ENCODE measurements at regions of chr7 and their contacts with region 1.

Region 1: DNA sequence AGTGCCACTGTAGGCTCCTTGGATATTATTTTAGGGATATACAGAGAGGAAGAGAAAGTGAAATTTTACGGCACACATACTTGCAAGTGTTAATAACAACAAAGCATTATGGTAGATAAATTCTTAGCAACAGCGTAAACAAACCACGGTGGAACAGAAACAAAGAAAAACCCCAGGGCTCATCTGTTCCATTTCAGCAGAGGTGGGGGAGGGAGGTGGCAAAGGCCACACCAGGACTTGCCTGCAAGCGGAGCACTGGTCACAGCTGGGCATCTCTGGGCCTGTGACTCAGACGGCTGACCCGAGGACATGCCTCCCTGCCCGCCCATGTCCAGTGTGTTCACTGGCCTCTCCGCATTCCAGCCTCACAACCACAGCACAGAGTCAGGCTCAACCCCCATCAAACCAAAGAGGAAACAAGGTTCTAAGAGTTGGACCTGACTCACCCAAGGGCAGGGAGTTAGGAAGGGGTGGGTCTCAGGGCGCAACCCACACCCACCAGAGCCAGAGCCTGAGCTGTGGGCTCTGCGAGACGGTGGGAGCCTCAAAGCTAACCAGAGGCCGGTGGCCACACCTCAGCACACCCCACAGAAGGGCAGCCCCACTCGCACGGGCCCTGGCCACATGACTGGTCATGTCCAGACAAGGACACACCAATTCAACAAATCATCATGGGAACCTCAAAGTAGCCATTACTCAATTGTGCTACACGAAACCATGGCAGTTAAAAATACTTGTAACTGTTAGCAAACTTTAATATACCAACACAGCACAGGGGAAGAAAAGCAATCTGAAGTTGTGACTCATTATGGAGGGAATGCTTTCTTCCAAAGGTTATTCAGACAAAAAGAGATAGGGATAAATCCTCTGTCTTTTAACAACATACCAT is 10.7 kb downstream of the ESYT2 start:
- DNase-seq: peak; percentile 91
- ATAC-seq: peak; percentile 98
- H3K4me3 ChIP-seq: peak overlapping the region; percentile 50 to 66 (median 55)
- H3K27ac ChIP-seq: peak overlapping the region; percentile 96
- H3K4me1 ChIP-seq: peaks cover 76% of the 10 kb centered on the region
- H3K27me3 ChIP-seq: no peaks in the 10 kb centered on the region
- CTCF ChIP-seq: peak; percentile 66
- EP300 ChIP-seq: peak in 1 of 2 experiments; percentile 46; a peak in 3 of 4 replicates
- POLR2A ChIP-seq: peak; percentile 38 to 79; a peak in 3 of 4 replicates
- RAD21 ChIP-seq: peak; percentile 83

Region 2: GRCh38 chr7:158704704-158705468 is 113.7 kb before region 1 on chr7 and contains the start of gene NCAPG2:
- CTCF ChIA-PET with region 1: no interaction called
- POLR2A ChIA-PET with region 1: interaction called, 4 read pairs
- in situ Hi-C with region 1: no loop called
- intact Hi-C with region 1: loop called (anchors 10 kb)
- DNase-seq: peak; percentile 94
- ATAC-seq: peak; percentile 96
- H3K4me3 ChIP-seq: peak within 1 kb of the TSS; percentile 77 to 99 (median 98)
- H3K27ac ChIP-seq: peak within 1 kb of the TSS; percentile 71
- H3K4me1 ChIP-seq: peaks cover 53% of the 10 kb centered on the region
- H3K27me3 ChIP-seq: no peaks in the 10 kb centered on the region; a peak in 1 of 5 replicates
- CTCF ChIP-seq: peak; percentile 41; the same call in 1 of the 2 replicates
- EP300 ChIP-seq: no peak
- POLR2A ChIP-seq: peak; percentile 34 to 84; a peak in 3 of 4 replicates
- RAD21 ChIP-seq: peak; percentile 35; the same call in 1 of the 2 replicates
- total RNA-seq, gene NCAPG2: 30.7 and 46.3 TPM in 2 replicates

Region 3: DNA sequence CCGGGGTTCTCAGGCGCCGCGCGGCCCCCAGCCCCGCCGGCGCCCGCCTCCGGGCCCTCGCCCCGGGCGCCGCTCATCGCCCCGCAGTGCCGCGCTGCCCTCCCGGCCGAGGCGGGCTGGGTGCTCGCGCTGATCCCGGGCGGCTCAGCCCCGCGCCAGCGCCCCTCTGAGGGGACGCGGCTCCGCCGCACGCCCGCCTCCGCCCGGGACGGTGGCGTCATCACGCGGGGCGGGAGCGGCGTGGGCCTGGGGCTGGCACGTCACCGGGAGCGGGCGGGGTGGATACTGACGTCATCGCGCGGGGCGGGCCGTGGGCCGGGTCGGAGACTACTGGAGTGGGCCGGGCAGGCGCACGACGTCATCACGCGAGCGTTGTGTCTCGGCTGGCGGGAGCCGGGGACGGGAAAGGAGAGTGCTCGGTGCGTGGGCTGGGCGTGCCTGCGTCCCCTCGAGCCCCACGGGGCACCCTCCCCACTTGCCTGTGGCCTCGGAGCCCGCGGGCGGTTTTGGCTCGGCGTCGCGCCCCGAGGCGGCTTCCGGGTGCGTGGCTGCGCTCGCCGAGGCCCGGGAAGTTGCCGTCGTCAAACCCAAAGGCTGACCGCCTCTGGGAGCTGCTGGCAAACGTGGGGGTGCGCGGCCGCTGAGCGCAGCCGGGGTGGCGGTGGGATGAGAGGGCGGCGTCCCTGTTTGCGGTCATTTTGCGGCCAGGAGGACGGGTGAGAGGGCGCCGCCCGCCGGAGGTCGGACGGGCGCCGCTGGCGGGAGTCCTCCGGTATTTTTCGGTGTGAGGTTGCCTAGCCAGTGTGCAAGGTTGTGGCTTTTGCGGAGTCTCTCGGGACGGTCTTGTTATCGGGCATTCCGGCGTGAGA is 11.0 kb after region 1 on chr7 and contains the start of gene ESYT2:
- CTCF ChIA-PET with region 1: no interaction called
- POLR2A ChIA-PET with region 1: interaction called, 21 read pairs
- in situ Hi-C with region 1: no loop called
- intact Hi-C with region 1: no loop called
- DNase-seq: peak; percentile 83
- ATAC-seq: peak; percentile 77
- H3K4me3 ChIP-seq: peak within 1 kb of the TSS; percentile 77 to 96 (median 90)
- H3K27ac ChIP-seq: peak within 1 kb of the TSS; percentile 90
- H3K4me1 ChIP-seq: peaks cover 41% of the 10 kb centered on the region
- H3K27me3 ChIP-seq: no peaks in the 10 kb centered on the region; a peak in 1 of 5 replicates
- CTCF ChIP-seq: peak; percentile 58
- EP300 ChIP-seq: no peak
- POLR2A ChIP-seq: peak; percentile 88 to 95
- RAD21 ChIP-seq: peak; percentile 60
- total RNA-seq, gene ESYT2: 26.0 and 37.3 TPM in 2 replicates

Region 4: GRCh38 chr7:158856883-158857668 is 38.5 kb after region 1 on chr7:
- CTCF ChIA-PET with region 1: no interaction called
- POLR2A ChIA-PET with region 1: no interaction called
- in situ Hi-C with region 1: no loop called
- intact Hi-C with region 1: loop called (anchors 5 kb)
- DNase-seq: no peak
- ATAC-seq: peak; percentile 62
- H3K4me3 ChIP-seq: peak overlapping the region; percentile 74 to 91 (median 88)
- H3K27ac ChIP-seq: peak overlapping the region; percentile 62
- H3K4me1 ChIP-seq: peaks cover 52% of the 10 kb centered on the region
- H3K27me3 ChIP-seq: no peaks in the 10 kb centered on the region
- CTCF ChIP-seq: no peak
- EP300 ChIP-seq: no peak
- POLR2A ChIP-seq: no peak
- RAD21 ChIP-seq: no peak

Region 5: DNA sequence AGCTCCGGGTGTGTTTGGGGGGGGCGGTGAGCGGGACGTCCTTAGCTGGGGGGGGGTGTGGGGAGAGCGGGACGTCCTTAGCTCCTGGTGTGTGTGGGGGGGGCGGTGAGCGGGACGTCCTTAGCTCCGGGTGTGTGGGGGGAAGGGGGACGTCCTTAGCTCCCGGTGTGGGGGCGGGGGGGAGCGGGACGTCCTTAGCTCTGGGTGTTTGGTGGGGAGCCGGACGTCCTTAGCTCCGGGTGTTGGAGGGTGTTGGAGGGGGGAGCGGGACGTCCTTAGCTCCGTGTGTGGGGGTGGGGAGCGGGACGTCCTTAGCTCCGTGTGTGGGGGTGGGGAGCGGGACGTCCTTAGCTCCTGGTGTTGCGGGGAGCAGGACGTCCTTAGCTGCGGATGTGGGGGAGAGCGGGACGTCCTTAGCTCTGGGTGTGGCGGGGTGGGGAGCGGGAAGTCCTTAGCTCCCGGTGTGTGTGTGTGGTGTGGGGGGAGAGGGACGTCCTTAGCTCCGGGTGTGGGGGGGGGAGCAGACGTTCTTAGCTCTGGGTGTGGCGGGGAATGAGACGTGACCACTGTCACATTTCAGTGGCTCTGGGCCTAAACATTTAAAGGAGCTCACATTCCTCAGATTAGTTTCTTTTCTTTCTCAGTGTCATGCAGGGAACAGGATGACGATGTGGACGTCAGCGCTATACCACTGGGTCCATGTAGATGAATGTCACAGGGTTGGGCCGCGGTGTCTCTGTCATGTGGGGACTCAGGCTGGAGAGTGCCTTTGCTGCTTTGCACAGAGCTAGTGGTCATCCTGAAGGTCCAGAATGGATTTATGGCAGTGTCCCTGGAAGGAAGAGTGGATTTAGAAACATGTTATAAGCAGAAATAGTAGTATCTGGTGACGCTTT is 45.3 kb after region 1 on chr7:
- CTCF ChIA-PET with region 1: no interaction called
- POLR2A ChIA-PET with region 1: interaction called, 12 read pairs
- in situ Hi-C with region 1: no loop called
- intact Hi-C with region 1: loop called (anchors 5 kb)
- DNase-seq: peak; percentile 38
- ATAC-seq: peak; percentile 70
- H3K4me3 ChIP-seq: peak overlapping the region; percentile 46 to 71 (median 67); a peak in 5 of 6 replicates
- H3K27ac ChIP-seq: peak overlapping the region; percentile 61
- H3K4me1 ChIP-seq: peaks cover 61% of the 10 kb centered on the region
- H3K27me3 ChIP-seq: no peaks in the 10 kb centered on the region
- CTCF ChIP-seq: no peak
- EP300 ChIP-seq: no peak; a peak in 1 of 4 replicates
- POLR2A ChIP-seq: peak in 1 of 2 experiments; percentile 49; a peak in 1 of 4 replicates
- RAD21 ChIP-seq: no peak

Region 6: DNA sequence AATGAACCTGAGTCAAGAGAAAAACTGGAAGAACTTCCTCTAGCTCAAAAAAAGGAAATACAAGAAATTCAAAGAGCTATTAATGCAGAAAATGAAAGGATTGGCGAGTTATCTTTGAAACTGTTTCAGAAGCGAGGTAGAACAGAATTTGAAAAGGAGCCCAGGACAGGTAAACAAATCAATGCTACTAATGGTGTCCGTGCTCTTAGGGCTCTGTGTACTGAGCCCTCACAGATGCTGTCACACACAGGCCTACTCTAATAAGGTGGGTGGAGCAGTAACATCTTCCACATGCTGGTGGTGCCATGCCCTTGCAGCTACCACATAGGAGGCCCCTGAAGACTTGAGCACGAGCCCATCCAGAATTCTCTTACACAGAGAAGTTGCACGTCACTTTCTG is 83.9 kb after region 1 on chr7:
- CTCF ChIA-PET with region 1: no interaction called
- POLR2A ChIA-PET with region 1: no interaction called
- in situ Hi-C with region 1: no loop called
- intact Hi-C with region 1: no loop called
- DNase-seq: no peak
- ATAC-seq: no peak
- H3K4me3 ChIP-seq: no peak overlapping the region
- H3K27ac ChIP-seq: no peak overlapping the region
- H3K4me1 ChIP-seq: no peaks in the 10 kb centered on the region
- H3K27me3 ChIP-seq: no peaks in the 10 kb centered on the region
- CTCF ChIP-seq: no peak
- EP300 ChIP-seq: no peak
- POLR2A ChIP-seq: no peak
- RAD21 ChIP-seq: no peak